PC-3 (cell line): ENCODE measurements at regions of chr1 and their contacts with region 1.

Region 1: GRCh38 chr1:30911046-30911954 is 2.7 kb upstream of the SDC3 start:
- DNase-seq: peak; percentile 80
- ATAC-seq: peak; percentile 80
- H3K4me3 ChIP-seq: no peak overlapping the region
- H3K27ac ChIP-seq: no peak overlapping the region
- H3K4me1 ChIP-seq: peaks cover 10% of the 10 kb centered on the region
- H3K27me3 ChIP-seq: no peaks in the 10 kb centered on the region
- CTCF ChIP-seq: peak; percentile 91

Region 2: DNA sequence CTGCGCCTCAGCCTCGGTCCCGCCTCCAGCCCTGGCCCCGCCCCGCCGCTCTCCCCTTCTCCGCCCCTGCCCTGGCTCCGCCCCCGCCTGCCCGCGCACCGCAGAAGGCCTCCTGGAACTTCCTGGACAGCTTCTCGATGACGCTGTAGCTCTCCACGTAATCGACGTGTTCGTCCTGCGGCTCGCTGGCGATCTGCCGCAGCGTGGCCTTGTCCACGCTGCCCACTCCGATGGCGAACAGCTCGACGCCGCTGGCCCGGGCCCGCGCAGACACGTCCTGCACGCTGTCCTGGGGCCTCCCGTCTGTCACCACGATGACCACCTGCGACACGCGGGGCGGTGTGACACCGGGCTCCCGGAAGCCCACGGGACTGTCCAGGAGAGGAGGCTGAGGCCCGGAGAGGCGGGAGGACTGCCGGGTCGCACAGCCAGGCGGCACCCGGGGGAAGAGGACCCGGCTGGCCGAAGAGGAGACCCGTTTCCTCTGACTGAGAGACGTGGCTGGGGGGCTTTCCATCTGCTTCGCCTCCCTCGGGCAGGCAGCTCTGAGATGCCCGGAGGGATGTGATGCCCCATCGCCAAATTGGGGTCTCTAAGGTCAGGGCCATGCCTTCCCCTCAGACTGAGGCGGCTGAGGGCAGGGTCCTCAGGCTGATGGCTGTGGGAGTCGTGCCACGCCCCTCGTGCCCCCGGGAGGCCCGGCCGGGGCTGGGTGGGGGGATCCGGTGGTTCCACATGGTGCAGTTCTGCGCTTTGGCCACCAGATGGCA is 192.5 kb before region 1 on chr1:
- CTCF ChIA-PET with region 1: interaction called, 4 read pairs
- POLR2A ChIA-PET with region 1: no interaction called
- intact Hi-C with region 1: loop called (anchors 1 kb)
- DNase-seq: no peak
- ATAC-seq: peak; percentile 71
- H3K4me3 ChIP-seq: peak overlapping the region; percentile 67
- H3K27ac ChIP-seq: peak overlapping the region; percentile 81
- H3K4me1 ChIP-seq: peaks cover 10% of the 10 kb centered on the region
- H3K27me3 ChIP-seq: no peaks in the 10 kb centered on the region
- CTCF ChIP-seq: peak; percentile 96

Region 3: GRCh38 chr1:30779294-30780071 is 131.8 kb before region 1 on chr1:
- CTCF ChIA-PET with region 1: interaction called, 5 read pairs
- POLR2A ChIA-PET with region 1: no interaction called
- intact Hi-C with region 1: loop called (anchors 1 kb)
- DNase-seq: peak; percentile 85
- ATAC-seq: peak; percentile 72
- H3K4me3 ChIP-seq: no peak overlapping the region
- H3K27ac ChIP-seq: no peak overlapping the region
- H3K4me1 ChIP-seq: peaks cover 7% of the 10 kb centered on the region; the same call in 1 of the 2 replicates
- H3K27me3 ChIP-seq: no peaks in the 10 kb centered on the region
- CTCF ChIP-seq: peak; percentile 94

Region 4: GRCh38 chr1:30801771-30802198 is 109.5 kb before region 1 on chr1:
- CTCF ChIA-PET with region 1: interaction called, 26 read pairs
- POLR2A ChIA-PET with region 1: no interaction called
- intact Hi-C with region 1: loop called (anchors 1 kb)
- DNase-seq: peak; percentile 82
- ATAC-seq: peak; percentile 72
- H3K4me3 ChIP-seq: peak overlapping the region; percentile 37; the same call in 1 of the 2 replicates
- H3K27ac ChIP-seq: no peak overlapping the region
- H3K4me1 ChIP-seq: no peaks in the 10 kb centered on the region; the same call in 1 of the 2 replicates
- H3K27me3 ChIP-seq: no peaks in the 10 kb centered on the region
- CTCF ChIP-seq: peak; percentile 95